ENCODE measurements at regions of chr13 and their contacts with region 1.

Region 1: DNA sequence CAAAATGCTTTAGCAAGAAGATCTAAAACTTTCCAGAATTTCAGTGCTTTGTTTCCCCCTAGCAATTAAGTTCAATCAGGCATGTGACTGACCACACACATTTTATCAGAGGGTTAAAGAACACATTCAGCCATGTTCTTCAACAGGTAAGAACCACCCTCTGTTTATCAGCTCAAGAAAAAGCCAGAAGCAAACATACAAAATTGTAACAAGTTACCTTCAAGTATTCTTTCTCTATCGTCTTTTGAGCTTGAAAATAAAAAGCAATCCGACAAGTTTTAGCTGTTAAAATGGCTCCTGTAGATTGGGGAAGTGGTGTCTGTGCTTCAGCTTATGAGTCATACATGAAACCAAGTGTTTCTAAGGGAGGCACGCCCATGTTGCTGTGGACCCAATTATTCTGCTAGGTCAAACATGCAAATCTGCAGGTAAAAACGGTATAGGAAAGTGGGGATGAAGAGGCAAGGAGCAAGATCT is at the start of gene ELF1:
- DNase-seq: peak; percentile 10 to 84 (median 51)
- ATAC-seq: peak; percentile 90 to 96 (median 94)
- H3K4me3 ChIP-seq: peak within 1 kb of the TSS; percentile 64 to 65
- H3K4me3 Mint-ChIP-seq: peak within 1 kb of the TSS; percentile 85 to 92 (median 90)
- H3K27ac ChIP-seq: peak within 1 kb of the TSS; percentile 95
- H3K27ac Mint-ChIP-seq: peak within 1 kb of the TSS; percentile 95 to 97
- H3K4me1 ChIP-seq: peaks cover 8 to 33% of the 10 kb centered on the region in 2 experiments
- H3K4me1 Mint-ChIP-seq: peaks cover 44 to 63% (median 51%) of the 10 kb centered on the region in 3 donors
- H3K27me3 ChIP-seq: no peaks in the 10 kb centered on the region
- H3K27me3 Mint-ChIP-seq: no peaks in the 10 kb centered on the region
- total RNA-seq, gene ELF1: 133 to 221 (median 146) TPM

Region 2: GRCh38 chr13:40984668-40985366 is 34.2 kb before region 1 on chr13:
- CTCF ChIA-PET with region 1: interaction called in 1 of 2 experiments, 13 read pairs
- POLR2A ChIA-PET with region 1: interaction called, 5 to 17 read pairs
- DNase-seq: peak in 1 of 35 experiments; percentile 73
- ATAC-seq: peak; percentile 39 to 54 (median 46)
- H3K4me3 ChIP-seq: peak overlapping the region; percentile 39 to 45
- H3K4me3 Mint-ChIP-seq: peak overlapping the region; percentile 79 to 96 (median 85)
- H3K27ac ChIP-seq: peak overlapping the region; percentile 94
- H3K27ac Mint-ChIP-seq: peak overlapping the region; percentile 93 to 98
- H3K4me1 ChIP-seq: peaks cover 27 to 47% of the 10 kb centered on the region in 2 experiments
- H3K4me1 Mint-ChIP-seq: peaks cover 56 to 72% (median 70%) of the 10 kb centered on the region in 3 donors
- H3K27me3 ChIP-seq: no peaks in the 10 kb centered on the region
- H3K27me3 Mint-ChIP-seq: no peaks in the 10 kb centered on the region

Region 3: GRCh38 chr13:41054212-41054877 is 35.3 kb after region 1 on chr13:
- CTCF ChIA-PET with region 1: interaction called, 4 to 31 read pairs
- POLR2A ChIA-PET with region 1: interaction called, 3 to 7 read pairs
- DNase-seq: peak in 27 of 35 experiments; percentile 7 to 79 (median 31)
- ATAC-seq: peak; percentile 70 to 79 (median 75)
- H3K4me3 ChIP-seq: no peak overlapping the region
- H3K4me3 Mint-ChIP-seq: peak overlapping the region in 1 of 3 donors; percentile 8
- H3K27ac ChIP-seq: no peak overlapping the region
- H3K27ac Mint-ChIP-seq: peak overlapping the region in 1 of 2 donors; percentile 77
- H3K4me1 ChIP-seq: peaks cover 4 to 9% of the 10 kb centered on the region in 2 experiments
- H3K4me1 Mint-ChIP-seq: peaks cover 52 to 59% (median 54%) of the 10 kb centered on the region in 3 donors
- H3K27me3 ChIP-seq: no peaks in the 10 kb centered on the region
- H3K27me3 Mint-ChIP-seq: no peaks in the 10 kb centered on the region

Region 4: DNA sequence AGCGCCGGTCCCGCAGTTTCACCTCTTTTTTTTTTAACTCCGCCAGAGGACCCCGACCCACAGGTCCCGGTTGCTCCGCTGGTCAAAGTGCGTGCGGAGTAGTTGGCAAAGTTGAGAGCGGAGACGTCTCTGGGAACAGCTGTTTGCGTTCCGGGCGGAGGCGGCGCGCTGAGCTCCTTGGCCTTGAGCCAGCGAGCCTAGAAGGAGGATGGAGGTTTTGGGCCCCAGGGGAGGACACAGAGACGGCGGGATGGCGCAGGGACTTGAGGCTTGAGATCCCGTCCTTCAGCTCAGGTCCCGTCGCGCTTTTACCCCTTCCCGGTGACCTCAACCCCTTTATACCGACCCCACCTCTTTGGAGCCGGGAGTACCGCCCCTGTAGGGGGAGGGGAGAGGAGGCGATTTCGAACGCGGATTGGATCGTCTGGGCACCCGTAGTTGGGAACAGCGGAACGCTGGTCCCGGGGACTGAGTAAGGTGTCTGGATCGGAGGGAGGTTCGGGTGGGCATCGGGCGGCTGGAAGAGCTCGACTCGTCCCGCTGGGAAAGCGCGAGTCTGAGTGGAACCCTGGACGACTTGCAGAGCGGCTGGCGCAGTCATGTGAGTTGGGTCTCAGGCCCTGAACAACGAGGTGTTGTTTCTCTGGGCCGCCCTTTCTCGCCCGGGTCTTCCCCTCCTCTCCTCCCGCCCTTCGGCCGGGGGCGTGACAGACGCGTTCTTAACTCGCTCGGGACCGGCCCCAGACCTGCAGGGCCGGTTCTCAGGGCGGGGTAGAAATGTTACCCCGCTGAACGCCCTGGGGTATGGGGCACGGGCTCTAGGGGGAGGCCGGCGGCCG is 42.2 kb after region 1 on chr13 and contains the start of gene WBP4:
- CTCF ChIA-PET with region 1: interaction called, 4 to 11 read pairs
- POLR2A ChIA-PET with region 1: interaction called in 1 of 2 experiments, 6 read pairs
- DNase-seq: peak; percentile 62 to 95 (median 78)
- ATAC-seq: peak; percentile 67 to 74 (median 68)
- H3K4me3 ChIP-seq: peak within 1 kb of the TSS; percentile 96 to 99
- H3K4me3 Mint-ChIP-seq: peak within 1 kb of the TSS; percentile 98 to 100 (median 99)
- H3K27ac ChIP-seq: peak within 1 kb of the TSS; percentile 82
- H3K27ac Mint-ChIP-seq: peak within 1 kb of the TSS; percentile 99 to 100
- H3K4me1 ChIP-seq: peaks cover 11 to 15% of the 10 kb centered on the region in 2 experiments
- H3K4me1 Mint-ChIP-seq: peaks cover 56 to 69% (median 60%) of the 10 kb centered on the region in 3 donors
- H3K27me3 ChIP-seq: no peaks in the 10 kb centered on the region
- H3K27me3 Mint-ChIP-seq: no peaks in the 10 kb centered on the region
- total RNA-seq, gene WBP4: 4.3 to 7.6 (median 4.8) TPM